ENCODE measurements at regions of chr4 and their contacts with region 1.

Region 1: GRCh38 chr4:152535903-152536544 is at the start of gene FBXW7:
- DNase-seq: peak; percentile 100
- ATAC-seq: peak; percentile 83
- H3K4me3 ChIP-seq: peak within 1 kb of the TSS; percentile 58 to 91 (median 81)
- H3K4me3 Mint-ChIP-seq: peak within 1 kb of the TSS; percentile 98
- H3K27ac ChIP-seq: peak within 1 kb of the TSS; percentile 83 to 88
- H3K27ac Mint-ChIP-seq: peak within 1 kb of the TSS; percentile 96
- H3K4me1 ChIP-seq: peaks cover 27 to 36% of the 10 kb centered on the region in 2 donors
- H3K4me1 Mint-ChIP-seq: peaks cover 67% of the 10 kb centered on the region
- H3K27me3 ChIP-seq: no peaks in the 10 kb centered on the region
- H3K27me3 Mint-ChIP-seq: no peaks in the 10 kb centered on the region
- CTCF ChIP-seq: no peak
- total RNA-seq, gene FBXW7: 117 and 125 TPM in 2 replicates

Region 2: GRCh38 chr4:151015459-151016347 is 1520.3 kb before region 1 on chr4:
- CTCF ChIA-PET with region 1: no interaction called
- POLR2A ChIA-PET with region 1: no interaction called
- intact Hi-C with region 1: loop called (anchors 5 kb)
- DNase-seq: peak; percentile 92
- ATAC-seq: peak; percentile 77
- H3K4me3 ChIP-seq: peak overlapping the region; percentile 77 to 97 (median 91)
- H3K4me3 Mint-ChIP-seq: peak overlapping the region; percentile 100
- H3K27ac ChIP-seq: peak overlapping the region; percentile 89 to 95
- H3K27ac Mint-ChIP-seq: peak overlapping the region; percentile 99
- H3K4me1 ChIP-seq: peaks cover 29 to 32% of the 10 kb centered on the region in 2 donors
- H3K4me1 Mint-ChIP-seq: peaks cover 33% of the 10 kb centered on the region
- H3K27me3 ChIP-seq: no peaks in the 10 kb centered on the region
- H3K27me3 Mint-ChIP-seq: no peaks in the 10 kb centered on the region
- CTCF ChIP-seq: no peak

Region 3: GRCh38 chr4:151760712-151761527 is 775.1 kb before region 1 on chr4 and contains the start of gene GATB:
- CTCF ChIA-PET with region 1: no interaction called
- POLR2A ChIA-PET with region 1: no interaction called
- intact Hi-C with region 1: loop called (anchors 1 kb)
- DNase-seq: peak; percentile 95
- ATAC-seq: peak; percentile 96
- H3K4me3 ChIP-seq: peak within 1 kb of the TSS; percentile 77 to 97 (median 83)
- H3K4me3 Mint-ChIP-seq: peak within 1 kb of the TSS; percentile 98
- H3K27ac ChIP-seq: peak within 1 kb of the TSS; percentile 60 to 77
- H3K27ac Mint-ChIP-seq: peak within 1 kb of the TSS; percentile 96
- H3K4me1 ChIP-seq: peaks cover 11 to 13% of the 10 kb centered on the region in 2 donors
- H3K4me1 Mint-ChIP-seq: peaks cover 17% of the 10 kb centered on the region
- H3K27me3 ChIP-seq: peaks cover 0 to 3% (median 0%) of the 10 kb centered on the region in 4 experiments
- H3K27me3 Mint-ChIP-seq: peaks cover 12% of the 10 kb centered on the region
- CTCF ChIP-seq: peak; percentile 74
- total RNA-seq, gene GATB: 19.2 and 22.7 TPM in 2 replicates

Region 4: DNA sequence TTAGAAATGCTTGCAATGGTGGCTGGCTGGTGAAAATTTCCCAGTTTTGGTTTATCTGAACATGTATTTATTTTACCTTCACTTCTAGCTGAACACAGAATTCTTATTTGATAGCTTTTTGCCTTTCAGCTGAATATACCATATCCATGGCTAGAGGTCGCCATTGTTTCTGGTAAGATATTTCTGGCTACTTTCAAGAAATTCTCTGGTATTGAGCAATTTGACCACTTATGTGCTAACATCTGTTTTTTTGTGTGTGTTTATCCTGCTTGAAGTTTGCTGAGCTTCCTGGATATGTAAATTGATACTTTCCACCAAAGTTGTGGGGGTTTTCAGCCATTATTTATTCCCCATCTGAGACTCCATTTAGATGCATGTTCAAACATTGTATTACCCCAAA is 75.5 kb before region 1 on chr4:
- CTCF ChIA-PET with region 1: no interaction called
- POLR2A ChIA-PET with region 1: no interaction called
- intact Hi-C with region 1: loop called (anchors 5 kb)
- DNase-seq: no peak
- ATAC-seq: no peak
- H3K4me3 ChIP-seq: peak overlapping the region in 1 of 5 experiments; percentile 12
- H3K4me3 Mint-ChIP-seq: peak overlapping the region; percentile 66
- H3K27ac ChIP-seq: peak overlapping the region; percentile 30 to 60
- H3K27ac Mint-ChIP-seq: peak overlapping the region; percentile 69
- H3K4me1 ChIP-seq: peaks cover 68 to 73% of the 10 kb centered on the region in 2 donors
- H3K4me1 Mint-ChIP-seq: peaks cover 77% of the 10 kb centered on the region
- H3K27me3 ChIP-seq: no peaks in the 10 kb centered on the region
- H3K27me3 Mint-ChIP-seq: no peaks in the 10 kb centered on the region
- CTCF ChIP-seq: no peak

Region 5: GRCh38 chr4:152779513-152780266 is 243.7 kb after region 1 on chr4 and contains the starts of genes ARFIP1 and TIGD4:
- CTCF ChIA-PET with region 1: interaction called, 4 read pairs
- POLR2A ChIA-PET with region 1: interaction called, 7 read pairs
- intact Hi-C with region 1: loop called (anchors 1 kb)
- DNase-seq: peak; percentile 95
- ATAC-seq: peak; percentile 89
- H3K4me3 ChIP-seq: peak within 1 kb of the TSS; percentile 59 to 95 (median 90)
- H3K4me3 Mint-ChIP-seq: peak within 1 kb of the TSS; percentile 98
- H3K27ac ChIP-seq: peak within 1 kb of the TSS; percentile 60 to 79
- H3K27ac Mint-ChIP-seq: peak within 1 kb of the TSS; percentile 93
- H3K4me1 ChIP-seq: peaks cover 20 to 25% of the 10 kb centered on the region in 2 donors
- H3K4me1 Mint-ChIP-seq: peaks cover 51% of the 10 kb centered on the region
- H3K27me3 ChIP-seq: no peaks in the 10 kb centered on the region
- H3K27me3 Mint-ChIP-seq: peaks cover 5% of the 10 kb centered on the region
- CTCF ChIP-seq: peak; percentile 9
- total RNA-seq, gene ARFIP1: 23.5 and 27.0 TPM in 2 replicates
- total RNA-seq, gene TIGD4: 0.36 and 0.59 TPM in 2 replicates